GM10248 (cell line): ENCODE measurements at regions of chr10 and their contacts with region 1.

Region 1: GRCh38 chr10:95246579-95247051 is 44.2 kb downstream of the PDLIM1 start:
- DNase-seq: peak; percentile 66
- CTCF ChIP-seq: peak; percentile 75

Region 2: DNA sequence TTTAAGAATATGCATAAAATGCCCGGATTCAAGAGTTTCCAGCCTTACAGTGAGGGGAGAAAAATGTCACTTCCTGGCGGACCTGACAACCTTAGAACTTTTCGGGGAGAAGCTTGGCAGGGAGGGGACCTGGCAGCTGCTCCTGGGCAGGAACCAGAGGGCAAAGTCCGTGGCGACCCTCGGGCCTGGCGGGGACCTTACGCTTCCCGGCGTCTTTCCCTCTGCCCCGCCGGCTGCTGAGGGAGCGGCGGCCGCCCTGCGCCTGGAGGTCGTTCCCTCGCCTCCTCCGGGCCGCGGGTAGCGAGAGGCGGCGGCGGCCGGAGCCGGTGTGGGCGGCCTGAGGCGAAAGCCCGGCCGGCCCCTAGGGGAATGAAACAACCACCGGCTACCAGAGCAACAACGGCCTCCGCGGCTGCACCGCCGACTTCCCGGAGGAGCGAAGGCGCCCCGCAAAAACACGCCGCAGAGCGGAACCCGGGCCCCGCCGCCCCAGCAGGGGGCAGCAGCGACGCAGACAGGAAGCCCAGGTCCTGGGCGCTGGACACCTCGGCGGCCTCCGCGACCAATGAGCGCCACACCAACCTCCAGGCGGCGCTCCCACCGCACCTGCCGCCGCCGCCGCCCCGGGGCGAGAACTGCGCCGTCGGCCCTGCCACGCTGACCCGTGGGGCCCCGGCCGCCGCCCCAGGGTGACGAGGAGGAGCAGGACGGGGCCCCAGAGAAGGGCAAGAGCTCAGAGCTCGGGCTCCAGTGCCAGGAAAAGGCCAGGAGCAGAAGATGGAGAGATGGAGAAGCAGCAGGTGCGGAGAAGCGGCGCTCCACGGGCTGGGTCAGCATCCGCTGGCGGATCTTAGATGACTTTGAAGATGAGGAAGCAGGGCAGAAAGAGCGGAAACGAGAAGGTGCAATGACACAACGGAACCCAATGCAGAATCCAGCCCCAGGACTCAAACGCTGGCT is 63.1 kb before region 1 on chr10:
- CTCF ChIA-PET with region 1: interaction called, 24 read pairs
- POLR2A ChIA-PET with region 1: no interaction called
- DNase-seq: peak; percentile 93
- CTCF ChIP-seq: peak; percentile 96

Region 3: GRCh38 chr10:95229724-95230627 is 16.6 kb before region 1 on chr10:
- CTCF ChIA-PET with region 1: interaction called, 61 read pairs
- POLR2A ChIA-PET with region 1: no interaction called
- DNase-seq: no peak
- CTCF ChIP-seq: no peak

Region 4: GRCh38 chr10:95260397-95260881 is 13.8 kb after region 1 on chr10:
- CTCF ChIA-PET with region 1: interaction called, 57 read pairs
- POLR2A ChIA-PET with region 1: interaction called, 3 read pairs
- DNase-seq: peak; percentile 38
- CTCF ChIP-seq: no peak

Region 5: GRCh38 chr10:95273393-95274312 is 27.0 kb after region 1 on chr10:
- CTCF ChIA-PET with region 1: interaction called, 79 read pairs
- POLR2A ChIA-PET with region 1: no interaction called
- DNase-seq: no peak
- CTCF ChIP-seq: no peak

Region 6: DNA sequence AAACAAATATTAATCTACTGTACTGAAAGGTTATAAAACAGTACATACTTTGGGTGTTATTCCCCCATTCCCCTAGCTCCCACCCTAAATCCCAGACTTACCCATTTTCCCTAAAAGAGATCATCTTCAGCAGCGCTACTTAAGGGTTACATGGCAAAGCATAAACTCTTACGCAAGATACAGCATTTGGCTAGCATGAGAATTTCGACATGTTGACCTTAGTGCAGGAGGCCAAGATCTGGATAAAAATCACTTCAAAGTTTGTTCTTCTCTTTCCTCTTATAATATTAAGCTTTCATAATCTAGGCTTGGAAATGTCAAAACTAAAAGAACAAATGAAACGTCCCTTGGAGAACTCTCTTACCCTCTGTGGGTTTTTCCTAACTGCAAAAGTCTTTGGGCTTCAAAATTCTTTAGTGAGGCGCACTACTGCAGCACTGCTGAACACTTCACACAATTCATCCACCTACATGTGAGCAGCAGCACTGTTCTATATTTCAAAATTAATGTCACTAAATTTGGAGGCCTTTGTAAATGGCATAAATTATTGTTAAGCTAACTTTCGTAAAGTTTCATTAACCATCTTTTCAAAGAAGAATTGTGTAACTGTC is 103.7 kb after region 1 on chr10:
- CTCF ChIA-PET with region 1: interaction called, 16 read pairs
- POLR2A ChIA-PET with region 1: no interaction called
- DNase-seq: no peak
- CTCF ChIP-seq: no peak